ENCODE measurements at regions of chr1 and their contacts with region 1.

Region 1: GRCh38 chr1:48202030-48202752 is 20.3 kb upstream of the SLC5A9 start:
- DNase-seq: peak; percentile 60
- H3K4me3 ChIP-seq: no peak overlapping the region
- H3K27ac ChIP-seq: no peak overlapping the region
- H3K4me1 ChIP-seq: no peaks in the 10 kb centered on the region
- H3K27me3 ChIP-seq: no peaks in the 10 kb centered on the region
- CTCF ChIP-seq: peak; percentile 73 to 78
- POLR2A ChIP-seq: no peak

Region 2: DNA sequence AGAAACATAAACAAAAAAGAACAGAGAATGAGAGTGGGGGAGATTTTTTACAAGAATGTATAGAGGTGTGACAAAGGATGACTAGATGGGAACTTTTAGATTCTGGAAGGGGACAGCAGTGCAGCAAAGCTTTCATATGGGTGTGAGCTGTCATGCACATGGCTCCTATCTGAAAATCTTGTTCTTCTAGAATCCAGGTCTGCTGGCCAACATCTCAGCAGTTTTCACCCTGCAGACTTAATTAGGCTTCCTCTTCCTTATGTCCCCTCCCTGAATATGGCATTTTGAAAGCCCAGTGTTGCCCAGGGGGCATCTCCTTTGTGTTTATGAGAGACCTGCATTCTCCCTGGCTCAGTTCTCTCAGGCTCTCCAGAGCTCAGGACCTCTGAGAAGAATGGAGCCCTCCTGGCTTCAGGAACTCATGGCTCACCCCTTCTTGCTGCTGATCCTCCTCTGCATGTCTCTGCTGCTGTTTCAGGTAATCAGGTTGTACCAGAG is 1135.0 kb before region 1 on chr1 and contains the start of gene CYP4Z1:
- CTCF ChIA-PET with region 1: no interaction called
- POLR2A ChIA-PET with region 1: no interaction called
- dilution Hi-C with region 1: no loop called
- intact Hi-C with region 1: no loop called
- DNase-seq: no peak
- H3K4me3 ChIP-seq: no peak within 1 kb of the TSS
- H3K27ac ChIP-seq: no peak within 1 kb of the TSS
- H3K4me1 ChIP-seq: no peaks in the 10 kb centered on the region
- H3K27me3 ChIP-seq: no peaks in the 10 kb centered on the region
- CTCF ChIP-seq: no peak
- POLR2A ChIP-seq: no peak
- total RNA-seq, gene CYP4Z1: not detected in 2 replicates

Region 3: DNA sequence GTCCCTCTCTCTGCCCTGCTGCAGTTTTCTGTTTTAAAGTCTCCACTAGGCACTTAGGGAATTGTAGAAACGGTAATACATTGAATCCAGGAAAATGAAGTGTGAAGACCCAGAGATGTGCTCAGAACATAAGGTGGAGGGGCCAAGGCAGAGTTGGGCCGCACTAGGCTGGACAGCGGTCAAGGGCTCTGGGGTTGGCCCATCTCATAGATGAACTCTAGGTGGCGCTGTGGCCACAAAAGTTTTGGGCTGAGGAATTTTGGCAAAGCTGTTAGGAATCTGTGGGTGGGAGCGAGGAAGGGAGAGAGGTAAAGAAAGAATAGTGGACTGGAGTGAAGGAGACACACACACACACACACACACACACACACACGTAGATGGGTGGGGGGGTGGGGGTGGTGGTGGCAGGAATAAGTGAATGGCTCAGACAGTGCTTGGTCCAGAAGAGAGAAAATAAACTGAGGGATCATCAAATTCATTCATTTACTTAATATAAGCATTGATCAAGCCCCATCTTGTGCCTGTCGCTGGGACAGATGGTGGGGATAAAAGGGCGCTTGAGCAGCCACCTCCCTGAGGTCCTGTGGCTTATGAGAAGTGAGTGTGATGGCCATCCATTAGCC is 463.5 kb before region 1 on chr1:
- CTCF ChIA-PET with region 1: interaction called, 21 read pairs
- POLR2A ChIA-PET with region 1: no interaction called
- dilution Hi-C with region 1: no loop called
- intact Hi-C with region 1: loop called (anchors 1 kb)
- DNase-seq: peak; percentile 42
- H3K4me3 ChIP-seq: no peak overlapping the region
- H3K27ac ChIP-seq: no peak overlapping the region
- H3K4me1 ChIP-seq: no peaks in the 10 kb centered on the region
- H3K27me3 ChIP-seq: peaks cover 8 to 13% of the 10 kb centered on the region in 2 experiments
- CTCF ChIP-seq: peak; percentile 61 to 84
- POLR2A ChIP-seq: no peak

Region 4: DNA sequence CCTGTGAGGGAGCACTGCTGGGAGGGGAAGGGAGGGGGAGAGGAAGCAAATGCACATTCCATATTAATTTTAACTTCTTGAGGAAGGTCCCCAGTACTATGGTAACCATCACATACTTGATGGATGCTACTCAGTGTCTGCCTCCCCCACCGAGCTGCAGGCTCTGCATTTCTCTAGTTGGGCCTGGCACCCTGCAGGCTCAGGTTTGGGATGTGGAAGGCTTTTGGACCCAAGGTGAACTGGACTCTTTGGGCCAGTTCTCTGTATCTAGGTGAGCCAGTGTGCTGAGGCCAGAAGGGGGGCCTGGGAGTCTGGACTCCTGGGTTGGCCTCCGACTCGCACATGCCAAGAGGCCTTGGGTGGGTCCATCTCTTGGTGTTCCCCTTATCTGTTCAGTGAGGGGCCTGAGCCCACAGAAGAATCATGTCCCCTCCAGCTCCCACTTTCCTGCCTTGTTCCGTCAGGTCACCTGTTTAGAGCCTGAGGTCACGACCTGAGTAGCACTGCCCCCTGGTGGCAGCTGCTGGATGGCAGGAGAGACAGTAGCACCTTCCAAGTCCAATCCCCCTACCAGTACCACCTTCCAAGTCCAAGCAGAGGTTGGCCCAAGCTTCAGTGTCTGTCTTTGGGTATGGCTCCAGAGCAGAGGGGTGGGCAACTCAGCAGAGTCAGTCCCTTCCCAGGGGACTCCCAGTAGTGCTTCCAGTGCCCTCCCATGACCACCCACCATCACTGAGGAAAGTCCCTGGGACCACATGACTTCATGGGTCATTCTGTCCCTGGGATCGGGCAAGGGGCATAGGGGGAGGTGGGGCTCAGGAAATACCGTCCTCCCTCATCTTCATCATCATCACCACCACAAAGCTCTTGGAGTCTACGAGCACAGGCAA is 446.8 kb before region 1 on chr1:
- CTCF ChIA-PET with region 1: no interaction called
- POLR2A ChIA-PET with region 1: no interaction called
- dilution Hi-C with region 1: no loop called
- intact Hi-C with region 1: loop called (anchors 5 kb)
- DNase-seq: no peak
- H3K4me3 ChIP-seq: no peak overlapping the region
- H3K27ac ChIP-seq: no peak overlapping the region
- H3K4me1 ChIP-seq: no peaks in the 10 kb centered on the region
- H3K27me3 ChIP-seq: no peaks in the 10 kb centered on the region
- CTCF ChIP-seq: peak; percentile 41 to 50
- POLR2A ChIP-seq: no peak

Region 5: DNA sequence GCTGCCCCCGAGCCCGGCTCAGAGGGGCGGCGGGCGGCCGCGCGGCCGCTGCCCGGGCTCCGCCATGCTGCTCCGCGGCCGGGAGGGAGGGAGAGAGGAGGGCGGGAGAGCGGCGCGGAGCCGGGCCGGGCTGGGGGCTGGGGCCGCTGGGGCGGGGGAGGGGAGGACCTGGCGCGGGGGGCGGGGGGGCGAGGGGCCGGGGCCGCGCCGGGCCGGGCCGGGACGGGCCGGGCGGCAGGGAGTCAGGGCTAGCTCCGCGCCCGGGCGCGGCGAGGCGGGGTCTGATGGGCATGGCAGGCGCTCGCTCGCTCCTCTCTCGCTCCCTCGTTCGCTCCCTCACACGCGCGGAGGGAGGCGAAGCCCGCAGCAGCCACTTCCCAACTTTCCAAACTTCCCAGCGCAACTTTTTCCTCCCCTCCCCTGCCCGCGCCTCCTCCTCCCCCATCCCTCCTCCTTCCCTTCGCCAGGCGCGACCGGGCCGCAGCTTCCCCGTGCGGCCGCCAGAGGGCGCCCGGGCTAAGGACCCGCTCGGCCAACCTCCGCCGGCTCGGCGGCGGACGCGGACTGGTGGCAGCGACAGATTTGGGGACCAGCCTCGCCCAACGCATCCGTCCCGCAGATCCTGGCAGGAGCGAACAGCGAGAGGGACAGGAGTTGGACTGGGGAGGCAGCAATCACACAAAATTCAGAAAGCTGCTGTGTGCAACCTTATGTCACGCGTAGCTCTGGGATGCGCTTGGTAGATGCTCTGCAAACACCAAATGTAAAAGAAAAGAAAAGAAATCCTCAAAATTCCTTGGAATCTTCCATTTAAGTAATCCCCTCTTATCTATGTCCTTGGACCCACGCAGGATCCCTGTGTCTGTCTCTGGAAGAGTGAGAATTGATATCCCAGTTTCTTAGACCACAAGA is 204.6 kb before region 1 on chr1 and contains the start of gene TRABD2B:
- CTCF ChIA-PET with region 1: interaction called, 18 read pairs
- POLR2A ChIA-PET with region 1: no interaction called
- dilution Hi-C with region 1: no loop called
- intact Hi-C with region 1: loop called (anchors 1 kb)
- DNase-seq: peak; percentile 50
- H3K4me3 ChIP-seq: peak within 1 kb of the TSS in 1 of 3 experiments; percentile 39
- H3K27ac ChIP-seq: no peak within 1 kb of the TSS
- H3K4me1 ChIP-seq: peaks cover 4% of the 10 kb centered on the region
- H3K27me3 ChIP-seq: peaks cover 25 to 35% of the 10 kb centered on the region in 2 experiments
- CTCF ChIP-seq: peak; percentile 91 to 94
- POLR2A ChIP-seq: no peak
- total RNA-seq, gene TRABD2B: not detected in 2 replicates

Region 6: DNA sequence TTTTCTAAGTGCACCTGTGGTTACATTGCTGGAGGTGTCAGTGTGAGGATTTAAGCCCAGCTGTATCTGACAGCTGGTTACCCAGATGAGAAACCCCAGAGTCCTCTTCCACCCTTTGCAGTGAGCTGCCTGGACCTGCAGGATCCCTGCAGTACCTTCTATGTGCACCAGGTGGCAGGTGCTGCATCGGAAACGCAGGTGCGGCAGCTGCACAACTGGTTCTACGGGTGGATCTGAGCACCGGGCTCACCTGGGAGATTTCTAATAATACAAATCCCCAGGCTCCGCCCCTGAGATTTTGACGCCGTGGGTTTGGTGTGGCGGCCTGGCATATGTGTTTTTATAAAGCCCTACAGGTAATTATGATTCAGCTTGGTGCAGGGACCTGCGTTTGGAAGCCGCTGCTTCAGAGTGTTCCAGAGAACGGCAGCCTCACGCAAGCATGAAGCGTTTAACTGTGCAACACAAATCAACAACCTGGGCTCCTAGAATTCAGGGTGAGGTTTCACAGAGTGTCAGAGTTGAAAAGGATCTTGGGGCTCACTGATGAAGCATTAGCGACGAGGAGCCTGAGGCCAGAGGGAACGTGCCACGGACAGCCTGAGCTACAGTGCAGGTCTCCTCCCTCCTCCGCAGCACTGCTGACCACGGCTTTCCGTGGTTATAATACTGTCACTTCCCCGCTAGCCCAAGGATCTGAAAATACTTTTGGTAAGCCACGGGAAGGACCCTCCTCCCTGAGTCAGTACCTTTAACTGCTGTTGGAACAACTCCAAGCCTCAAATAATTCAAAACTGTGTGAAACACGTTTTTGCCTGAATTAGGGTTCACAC is 108.3 kb before region 1 on chr1:
- CTCF ChIA-PET with region 1: interaction called, 14 read pairs
- POLR2A ChIA-PET with region 1: no interaction called
- dilution Hi-C with region 1: no loop called
- intact Hi-C with region 1: loop called (anchors 1 kb)
- DNase-seq: peak; percentile 30
- H3K4me3 ChIP-seq: no peak overlapping the region
- H3K27ac ChIP-seq: no peak overlapping the region
- H3K4me1 ChIP-seq: no peaks in the 10 kb centered on the region
- H3K27me3 ChIP-seq: no peaks in the 10 kb centered on the region
- CTCF ChIP-seq: peak; percentile 59 to 78
- POLR2A ChIP-seq: no peak

Region 7: DNA sequence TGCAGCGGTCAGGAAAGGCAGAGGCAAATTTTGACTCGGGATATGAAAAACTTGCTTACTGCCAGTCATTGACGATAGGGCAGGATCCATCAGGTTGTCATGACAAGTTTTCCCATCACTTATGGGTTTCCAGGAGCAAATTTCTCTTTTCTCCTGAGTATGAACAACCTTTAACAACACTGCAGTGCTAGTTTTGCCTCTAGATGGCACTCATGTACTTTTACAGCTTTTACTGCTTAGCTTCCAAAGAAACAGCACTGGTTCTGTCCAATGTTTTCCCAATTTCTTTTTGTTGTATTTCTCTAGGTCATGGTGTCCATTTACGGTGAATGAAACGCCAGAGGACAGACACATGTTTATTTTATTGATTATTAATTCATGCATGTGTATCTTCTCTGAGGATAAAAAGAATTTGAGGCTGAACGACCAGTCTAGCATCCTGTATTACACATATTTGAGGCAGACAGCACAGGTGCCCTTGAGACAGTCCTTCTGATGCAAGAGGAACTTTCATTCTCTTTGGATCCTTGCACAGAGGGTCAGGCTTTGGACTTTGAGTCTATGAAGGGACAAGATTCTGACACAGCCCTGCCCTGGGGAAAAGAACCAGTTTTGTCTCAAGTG is 92.7 kb before region 1 on chr1:
- CTCF ChIA-PET with region 1: interaction called, 111 read pairs
- POLR2A ChIA-PET with region 1: no interaction called
- dilution Hi-C with region 1: no loop called
- intact Hi-C with region 1: loop called (anchors 1 kb)
- DNase-seq: peak; percentile 55
- H3K4me3 ChIP-seq: no peak overlapping the region
- H3K27ac ChIP-seq: no peak overlapping the region
- H3K4me1 ChIP-seq: no peaks in the 10 kb centered on the region
- H3K27me3 ChIP-seq: no peaks in the 10 kb centered on the region
- CTCF ChIP-seq: peak; percentile 64 to 78
- POLR2A ChIP-seq: no peak